Activated CD4-positive, alpha-beta T cell treated with anti-CD3 and anti-CD28 coated beads, Interleukin-2, amount 10 ng/mL, durations not matched to agents 24 days and 14 days (primary cell): ENCODE measurements at regions of chr3 and their contacts with region 1.

Region 1: GRCh38 chr3:148297013-148297412 is 400.7 kb upstream of the AGTR1 start:
- DNase-seq: no peak
- H3K4me3 Mint-ChIP-seq: no peak overlapping the region
- H3K27ac Mint-ChIP-seq: no peak overlapping the region
- H3K4me1 Mint-ChIP-seq: peaks cover 19% of the 10 kb centered on the region
- H3K27me3 Mint-ChIP-seq: no peaks in the 10 kb centered on the region

Region 2: GRCh38 chr3:148319161-148319915 is 22.3 kb after region 1 on chr3:
- intact Hi-C with region 1: loop called (anchors 1 kb)
- DNase-seq: no peak
- H3K4me3 Mint-ChIP-seq: no peak overlapping the region
- H3K27ac Mint-ChIP-seq: peak overlapping the region; percentile 13
- H3K4me1 Mint-ChIP-seq: peaks cover 3% of the 10 kb centered on the region
- H3K27me3 Mint-ChIP-seq: no peaks in the 10 kb centered on the region